K562 (cell line): ENCODE measurements at regions of chr7 and their contacts with region 1.

Region 1: DNA sequence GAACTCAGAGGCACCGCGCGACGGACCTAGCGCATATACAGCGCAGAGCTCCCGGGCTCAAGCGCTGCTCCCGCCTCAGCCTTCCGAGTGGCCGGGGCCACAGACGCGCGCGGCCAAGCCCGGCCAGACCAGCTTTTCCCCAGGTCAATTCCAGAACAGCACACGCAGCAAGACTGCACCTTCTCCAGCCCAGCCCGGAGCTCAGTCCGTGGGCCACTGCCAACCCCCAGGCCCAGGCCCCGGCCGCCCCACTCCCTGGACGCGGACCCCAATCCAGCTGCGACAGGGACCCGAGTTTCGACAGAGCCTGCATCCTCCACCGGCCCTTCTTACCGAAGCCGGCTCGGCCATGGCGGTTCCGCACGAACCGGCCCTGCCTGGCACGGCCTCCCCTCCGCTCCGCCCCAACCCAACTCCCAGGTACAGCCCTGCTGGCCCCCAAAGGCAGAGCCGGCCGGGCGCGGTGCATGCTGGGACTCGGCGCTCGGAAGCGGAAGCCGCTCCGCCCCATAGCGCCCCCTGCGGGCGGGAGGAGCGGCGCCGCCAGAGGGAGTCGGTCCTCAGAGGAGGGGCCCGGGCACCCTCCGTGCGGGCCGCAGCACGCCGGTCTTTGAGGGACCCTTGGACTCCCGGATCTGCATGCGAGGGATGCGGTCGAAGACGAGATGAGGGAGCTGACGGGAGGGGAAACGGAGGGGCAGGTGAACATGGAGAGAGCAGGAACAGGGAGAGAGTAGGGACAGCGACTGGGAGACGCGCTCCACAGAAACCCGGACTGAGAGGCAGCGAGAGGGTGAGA is at the start of gene ZNF425:
- DNase-seq: peak; percentile 97 to 99 (median 98)
- ATAC-seq: peak; percentile 86
- H3K4me3 ChIP-seq: peak within 1 kb of the TSS; percentile 98
- H3K27ac ChIP-seq: peak within 1 kb of the TSS; percentile 81
- H3K4me1 ChIP-seq: peaks cover 19 to 26% of the 10 kb centered on the region in 2 experiments
- H3K27me3 ChIP-seq: no peaks in the 10 kb centered on the region; a peak in 1 of 5 replicates
- CTCF ChIP-seq: peak; percentile 96 to 98 (median 97)
- EP300 ChIP-seq: peak; percentile 39; the same call in 1 of the 2 replicates
- POLR2A ChIP-seq: peak; percentile 99
- RAD21 ChIP-seq: peak; percentile 55 to 71
- polyA plus RNA-seq, gene ZNF425: 0.03 to 0.31 TPM

Region 2: DNA sequence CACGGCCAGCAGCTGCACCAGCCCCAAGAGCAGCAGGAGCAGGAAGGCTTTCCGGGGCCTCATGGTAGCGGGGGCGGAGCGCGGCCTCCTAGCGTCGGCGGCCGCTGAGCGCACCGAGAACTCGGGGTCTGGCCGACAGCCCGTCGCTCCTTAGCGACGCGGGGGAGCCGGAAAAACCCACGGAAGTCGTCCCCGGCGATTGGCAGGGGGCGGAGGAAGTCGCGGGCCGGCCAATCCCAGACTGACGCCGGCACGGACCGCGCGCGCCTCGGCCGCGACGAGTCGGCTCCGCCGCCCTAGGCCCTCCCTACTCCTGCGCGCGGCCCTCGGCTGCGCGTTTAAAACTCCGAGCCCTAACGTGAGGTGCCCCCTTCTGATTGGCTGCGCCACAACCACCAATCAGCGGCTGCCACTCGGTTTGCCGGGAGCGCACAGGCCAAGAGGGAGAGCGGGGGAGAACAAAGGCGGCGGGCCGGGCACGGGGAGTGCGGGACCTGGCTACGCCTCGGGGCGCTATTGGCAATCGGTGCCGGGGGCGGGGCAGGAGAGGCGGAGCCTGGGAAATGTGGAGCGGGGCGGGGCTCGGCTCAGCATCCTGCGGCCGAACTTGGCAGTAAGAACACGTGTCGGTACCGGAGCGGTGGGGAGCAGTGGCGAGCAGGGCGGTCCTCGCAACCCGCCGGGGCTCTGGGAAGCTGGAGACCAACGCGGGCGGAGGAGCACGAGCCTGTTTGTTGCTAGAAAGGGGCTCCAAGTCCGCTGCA is 97.5 kb before region 1 on chr7 and contains the start of gene PDIA4:
- CTCF ChIA-PET with region 1: interaction called, 4 read pairs
- POLR2A ChIA-PET with region 1: interaction called, 4 read pairs
- in situ Hi-C with region 1: no loop called
- intact Hi-C with region 1: loop called (anchors 2 kb)
- DNase-seq: peak; percentile 100
- ATAC-seq: peak; percentile 96
- H3K4me3 ChIP-seq: peak within 1 kb of the TSS; percentile 85
- H3K27ac ChIP-seq: peak within 1 kb of the TSS; percentile 92
- H3K4me1 ChIP-seq: peaks cover 14 to 18% of the 10 kb centered on the region in 2 experiments; a peak in 4 of 5 replicates
- H3K27me3 ChIP-seq: no peaks in the 10 kb centered on the region
- CTCF ChIP-seq: peak in 2 of 3 experiments; percentile 28 to 52; a peak in 3 of 6 replicates
- EP300 ChIP-seq: peak; percentile 34
- POLR2A ChIP-seq: peak; percentile 89
- RAD21 ChIP-seq: peak; percentile 12 to 23; a peak in 2 of 4 replicates
- polyA plus RNA-seq, gene PDIA4: 9.1 to 14.5 TPM

Region 3: GRCh38 chr7:149147072-149147751 is 21.1 kb after region 1 on chr7 and contains the start of gene ZNF398:
- CTCF ChIA-PET with region 1: interaction called, 23 read pairs
- POLR2A ChIA-PET with region 1: interaction called, 34 read pairs
- in situ Hi-C with region 1: no loop called
- intact Hi-C with region 1: loop called (anchors 1 kb)
- DNase-seq: peak; percentile 93 to 97 (median 97)
- ATAC-seq: peak; percentile 81
- H3K4me3 ChIP-seq: peak within 1 kb of the TSS; percentile 88
- H3K27ac ChIP-seq: peak within 1 kb of the TSS; percentile 82
- H3K4me1 ChIP-seq: peaks cover 16 to 40% of the 10 kb centered on the region in 2 experiments; a peak in 3 of 5 replicates
- H3K27me3 ChIP-seq: no peaks in the 10 kb centered on the region
- CTCF ChIP-seq: peak; percentile 52 to 89 (median 71)
- EP300 ChIP-seq: no peak
- POLR2A ChIP-seq: peak; percentile 85
- RAD21 ChIP-seq: peak in 1 of 2 experiments; percentile 28; a peak in 3 of 4 replicates
- polyA plus RNA-seq, gene ZNF398: 4.0 to 4.4 TPM

Region 4: DNA sequence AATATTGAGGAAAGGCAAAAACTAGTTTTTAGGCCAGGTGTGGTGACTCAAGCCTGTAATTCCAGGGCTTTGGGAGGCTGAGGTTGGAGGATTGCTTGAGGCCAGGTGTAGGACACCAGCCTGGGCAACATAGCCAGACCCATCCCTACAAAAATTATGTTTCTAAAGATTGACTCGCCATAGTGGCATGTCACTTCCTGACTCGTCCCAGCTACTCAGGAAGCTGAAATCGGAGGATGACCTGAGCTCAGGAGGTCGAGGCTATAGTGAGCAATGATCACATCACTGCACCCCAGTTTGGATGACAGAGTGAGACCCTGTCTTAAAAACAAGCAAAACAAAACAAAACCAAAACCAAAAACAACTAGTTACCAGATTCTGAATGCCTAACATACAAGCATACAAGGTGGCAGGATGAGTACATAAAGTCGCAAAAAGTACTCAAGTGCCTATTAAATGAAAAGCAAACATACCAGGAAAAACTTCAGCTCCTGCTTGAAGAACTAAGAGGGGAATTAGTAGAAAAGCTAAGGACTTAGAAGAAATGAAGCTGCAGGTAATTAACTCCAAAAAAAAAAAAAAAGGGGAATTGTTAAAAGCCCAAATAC is 35.3 kb after region 1 on chr7:
- CTCF ChIA-PET with region 1: no interaction called
- POLR2A ChIA-PET with region 1: no interaction called
- in situ Hi-C with region 1: no loop called
- intact Hi-C with region 1: no loop called
- DNase-seq: no peak
- ATAC-seq: no peak
- H3K4me3 ChIP-seq: no peak overlapping the region
- H3K27ac ChIP-seq: no peak overlapping the region
- H3K4me1 ChIP-seq: no peaks in the 10 kb centered on the region
- H3K27me3 ChIP-seq: no peaks in the 10 kb centered on the region
- CTCF ChIP-seq: no peak
- EP300 ChIP-seq: no peak
- POLR2A ChIP-seq: no peak
- RAD21 ChIP-seq: no peak

Region 5: DNA sequence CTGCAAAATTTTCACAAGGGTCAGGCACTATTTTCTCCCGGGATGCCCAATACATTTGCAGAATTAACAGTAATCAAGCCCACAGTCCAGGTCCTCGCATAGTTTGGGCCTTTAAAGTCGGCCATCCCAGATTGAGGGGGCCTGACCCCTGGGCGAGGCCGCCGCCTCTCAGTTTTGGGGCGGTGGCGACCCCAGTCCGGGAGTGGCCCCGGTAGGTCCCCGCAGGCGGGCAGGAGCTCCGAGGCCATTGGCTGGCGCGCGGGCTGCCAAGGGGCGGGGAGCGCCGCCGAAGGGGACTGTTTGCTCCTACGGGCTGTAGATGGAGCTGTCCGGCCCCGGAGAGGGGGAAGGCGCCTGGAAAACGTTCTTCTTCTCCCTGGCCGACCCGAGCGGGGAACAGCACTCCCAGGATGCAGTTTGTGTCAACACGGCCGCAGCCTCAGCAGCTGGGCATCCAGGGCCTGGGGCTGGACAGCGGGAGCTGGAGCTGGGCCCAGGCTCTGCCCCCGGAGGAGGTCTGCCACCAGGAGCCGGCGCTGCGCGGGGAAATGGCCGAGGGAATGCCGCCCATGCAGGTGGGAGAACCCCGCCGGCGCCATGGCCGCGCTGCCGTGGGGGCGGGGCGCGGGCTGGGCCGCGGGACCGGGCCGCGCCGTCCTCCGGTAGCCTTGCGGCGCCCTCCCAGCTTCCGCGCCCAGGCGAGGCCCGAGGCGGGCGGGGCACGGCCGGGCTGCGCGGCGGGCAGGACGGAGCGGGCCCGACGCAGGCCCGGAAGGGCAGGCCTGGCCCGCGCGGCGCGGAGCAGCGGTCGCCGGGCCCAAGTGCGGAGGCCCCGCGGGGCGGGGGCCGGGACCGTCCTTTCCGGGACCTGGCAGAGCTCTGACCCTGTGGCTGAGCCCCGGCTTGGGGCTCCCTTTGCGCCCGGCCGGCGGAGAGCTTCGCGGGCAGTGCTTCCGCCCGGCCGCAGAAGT is 69.4 kb after region 1 on chr7 and contains the start of gene ZNF282:
- CTCF ChIA-PET with region 1: no interaction called
- POLR2A ChIA-PET with region 1: interaction called, 4 read pairs
- in situ Hi-C with region 1: no loop called
- intact Hi-C with region 1: loop called (anchors 5 kb)
- DNase-seq: peak; percentile 95 to 98 (median 98)
- ATAC-seq: peak; percentile 97
- H3K4me3 ChIP-seq: peak within 1 kb of the TSS; percentile 99
- H3K27ac ChIP-seq: peak within 1 kb of the TSS; percentile 88
- H3K4me1 ChIP-seq: peaks cover 14 to 31% of the 10 kb centered on the region in 2 experiments; a peak in 4 of 5 replicates
- H3K27me3 ChIP-seq: no peaks in the 10 kb centered on the region
- CTCF ChIP-seq: peak; percentile 89 to 95 (median 93)
- EP300 ChIP-seq: peak; percentile 17; the same call in 1 of the 2 replicates
- POLR2A ChIP-seq: peak; percentile 92
- RAD21 ChIP-seq: peak; percentile 69 to 71
- polyA plus RNA-seq, gene ZNF282: 0.76 to 1.3 TPM